Activated CD4-positive, alpha-beta memory T cell treated with anti-CD3 and anti-CD28 coated beads, Interleukin-2, amount 10 ng/mL, durations not matched to agents 7 days and 5 days (primary cell): ENCODE measurements at regions of chr2 and their contacts with region 1.

Region 1: DNA sequence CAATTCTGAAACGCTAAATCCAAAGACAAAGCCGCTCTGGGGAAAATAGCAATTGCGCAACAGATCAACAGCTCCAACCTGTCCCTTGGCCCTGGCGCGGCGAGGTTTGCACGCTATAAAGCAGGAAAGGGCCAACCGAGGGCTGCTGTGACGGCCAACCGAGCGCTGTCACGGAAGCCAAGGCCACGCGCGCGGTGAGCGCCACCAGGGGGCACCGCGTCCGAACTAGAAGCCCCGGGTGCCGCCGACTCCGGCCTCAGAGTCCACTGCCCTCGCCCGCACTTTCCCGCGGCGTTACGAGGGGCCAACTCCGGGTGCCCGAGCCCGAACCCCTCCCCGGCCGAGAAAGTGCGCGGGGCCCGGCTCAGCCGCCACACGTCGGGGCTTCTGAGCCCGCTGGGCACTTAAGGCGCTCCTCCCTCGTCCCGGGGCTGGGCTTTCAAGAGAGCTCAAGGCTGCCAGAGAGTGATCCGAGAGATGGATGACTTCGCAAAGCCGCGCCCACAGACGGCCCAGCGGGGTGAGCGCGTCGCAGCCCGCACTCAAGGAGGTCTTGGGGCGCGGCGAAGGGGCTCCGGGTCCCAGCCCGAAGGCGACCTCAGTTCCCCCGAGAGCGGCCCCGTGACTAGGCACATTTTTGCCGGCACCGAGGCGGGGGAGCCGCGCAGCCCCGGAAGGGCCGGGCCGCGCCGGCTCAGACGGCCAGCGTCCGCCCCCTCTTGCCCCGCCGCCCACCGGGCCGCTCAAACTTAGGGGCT is 897 bp downstream of the NFE2L2 start:
- DNase-seq: peak; percentile 95
- H3K4me3 Mint-ChIP-seq: peak overlapping the region; percentile 93
- H3K27ac Mint-ChIP-seq: peak overlapping the region; percentile 99
- H3K4me1 Mint-ChIP-seq: peaks cover 49% of the 10 kb centered on the region
- H3K27me3 Mint-ChIP-seq: peaks cover 3% of the 10 kb centered on the region

Region 2: DNA sequence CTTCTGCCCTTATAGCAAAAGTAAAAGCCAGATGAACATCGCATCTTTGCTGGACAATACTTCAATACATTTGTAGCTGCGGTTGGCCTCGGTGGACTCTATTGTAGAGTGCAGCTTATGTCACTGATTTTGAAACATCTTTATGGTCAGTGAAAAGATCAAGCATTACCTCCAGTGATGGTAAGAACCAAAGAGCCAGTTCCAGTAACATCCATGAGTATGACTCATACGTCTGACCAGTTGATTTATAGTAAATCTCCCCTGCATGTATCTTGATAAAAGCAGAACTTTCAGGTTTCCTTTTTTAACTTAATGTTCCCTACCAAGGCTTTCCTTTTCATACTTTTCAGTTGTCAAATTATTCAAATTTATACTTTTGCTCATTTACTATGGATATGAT is 170.3 kb before region 1 on chr2:
- CTCF ChIA-PET with region 1: no interaction called
- POLR2A ChIA-PET with region 1: no interaction called
- DNase-seq: no peak
- H3K4me3 Mint-ChIP-seq: no peak overlapping the region
- H3K27ac Mint-ChIP-seq: no peak overlapping the region
- H3K4me1 Mint-ChIP-seq: no peaks in the 10 kb centered on the region
- H3K27me3 Mint-ChIP-seq: peaks cover 15% of the 10 kb centered on the region

Region 3: DNA sequence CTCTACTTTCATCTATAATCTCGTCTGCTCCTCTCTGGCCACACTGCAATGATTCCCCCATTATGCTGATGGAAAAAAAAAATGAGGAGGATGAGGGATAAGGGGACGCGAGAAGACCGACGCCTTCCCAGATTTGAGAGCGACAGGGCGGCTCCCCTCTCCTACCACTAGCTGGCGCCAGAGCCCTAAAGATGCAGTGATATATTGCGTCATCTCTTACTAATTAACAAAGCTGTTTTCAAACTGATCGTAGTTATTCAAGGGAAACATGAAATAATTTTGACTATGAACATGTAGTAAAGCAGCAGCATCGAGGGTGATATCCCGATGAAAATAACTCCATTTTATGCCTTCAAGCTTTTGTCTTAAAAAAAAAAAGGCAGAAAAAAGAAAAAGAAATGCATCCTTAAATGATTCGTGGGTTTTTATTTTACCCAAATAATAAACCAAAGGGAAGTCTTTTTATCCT is 99.0 kb before region 1 on chr2:
- CTCF ChIA-PET with region 1: interaction called, 63 read pairs
- POLR2A ChIA-PET with region 1: interaction called, 102 read pairs
- DNase-seq: peak; percentile 83
- H3K4me3 Mint-ChIP-seq: no peak overlapping the region
- H3K27ac Mint-ChIP-seq: no peak overlapping the region
- H3K4me1 Mint-ChIP-seq: peaks cover 36% of the 10 kb centered on the region
- H3K27me3 Mint-ChIP-seq: peaks cover 9% of the 10 kb centered on the region

Region 4: DNA sequence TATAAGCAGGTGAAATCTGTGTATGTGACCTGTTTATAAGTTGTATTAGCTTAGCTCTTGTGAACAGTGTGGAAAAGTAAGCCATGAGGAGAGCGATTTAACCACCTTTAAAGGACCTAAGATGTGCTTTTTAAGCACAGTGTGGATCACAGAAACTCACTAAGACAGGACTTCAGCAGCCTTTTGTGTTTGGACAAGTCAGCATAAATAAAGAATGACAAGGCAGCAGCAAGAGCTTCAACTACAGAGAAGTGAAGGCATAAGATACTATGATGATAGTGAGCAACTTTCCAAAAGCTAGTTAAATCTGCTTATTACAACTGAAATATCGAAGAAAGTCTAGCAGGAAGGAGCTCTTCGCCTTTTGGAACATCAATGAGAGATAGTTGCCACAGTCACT is 42.1 kb before region 1 on chr2:
- CTCF ChIA-PET with region 1: interaction called, 5 read pairs
- POLR2A ChIA-PET with region 1: interaction called, 135 read pairs
- DNase-seq: no peak
- H3K4me3 Mint-ChIP-seq: no peak overlapping the region
- H3K27ac Mint-ChIP-seq: no peak overlapping the region
- H3K4me1 Mint-ChIP-seq: peaks cover 43% of the 10 kb centered on the region
- H3K27me3 Mint-ChIP-seq: no peaks in the 10 kb centered on the region

Region 5: DNA sequence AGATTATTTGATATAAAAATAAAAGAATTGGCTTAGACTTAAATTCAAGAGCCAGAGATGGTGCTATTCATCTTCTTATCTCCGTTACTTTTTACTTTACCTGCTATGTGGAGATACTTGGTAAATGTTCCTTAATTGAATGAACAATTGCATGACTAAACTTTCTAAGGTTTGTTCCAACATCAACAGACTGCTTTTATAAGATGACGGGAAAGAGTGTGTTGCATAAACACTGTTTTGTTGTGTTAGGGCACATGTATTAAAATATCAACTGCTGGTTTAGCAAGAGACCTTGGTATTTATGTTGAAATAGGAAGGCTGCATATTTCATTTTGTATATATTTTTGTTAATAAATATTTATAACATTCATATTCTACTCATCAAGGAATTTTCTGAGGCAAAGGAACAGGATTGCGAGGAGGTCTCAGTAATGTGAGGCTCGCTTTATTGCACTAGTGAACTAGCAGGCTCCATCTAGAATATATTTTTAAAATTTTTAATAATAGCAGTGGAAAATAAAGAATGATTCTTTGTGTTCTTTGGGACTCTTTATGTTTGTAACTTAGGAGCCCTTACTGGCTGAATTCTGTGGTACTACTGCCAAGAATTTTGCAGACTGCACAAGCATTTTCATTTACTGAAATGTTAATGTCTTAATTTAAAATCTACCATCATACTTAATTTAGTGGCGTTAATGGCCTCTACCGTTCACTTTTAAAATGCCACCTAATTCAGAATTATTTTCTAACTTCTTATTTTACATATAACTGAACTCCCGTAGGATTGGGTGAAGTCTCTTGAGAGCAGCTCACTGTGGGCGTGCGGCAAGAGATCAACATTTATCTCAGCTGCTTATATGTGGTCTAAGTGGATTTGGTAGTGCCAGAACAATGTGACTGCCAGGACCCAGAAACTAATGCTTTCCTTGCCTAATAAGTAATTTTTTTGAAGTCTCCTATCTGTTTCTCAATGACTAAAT is 11.7 kb after region 1 on chr2:
- CTCF ChIA-PET with region 1: interaction called, 18 read pairs
- POLR2A ChIA-PET with region 1: interaction called, 88 read pairs
- DNase-seq: no peak
- H3K4me3 Mint-ChIP-seq: no peak overlapping the region
- H3K27ac Mint-ChIP-seq: no peak overlapping the region
- H3K4me1 Mint-ChIP-seq: peaks cover 14% of the 10 kb centered on the region
- H3K27me3 Mint-ChIP-seq: no peaks in the 10 kb centered on the region

Region 6: GRCh38 chr2:177296040-177296439 is 32.4 kb after region 1 on chr2:
- CTCF ChIA-PET with region 1: interaction called, 125 read pairs
- POLR2A ChIA-PET with region 1: interaction called, 187 read pairs
- DNase-seq: no peak
- H3K4me3 Mint-ChIP-seq: no peak overlapping the region
- H3K27ac Mint-ChIP-seq: no peak overlapping the region
- H3K4me1 Mint-ChIP-seq: peaks cover 34% of the 10 kb centered on the region
- H3K27me3 Mint-ChIP-seq: no peaks in the 10 kb centered on the region

Region 7: GRCh38 chr2:177392373-177393202 is 129.0 kb after region 1 on chr2 and contains the start of gene AGPS:
- CTCF ChIA-PET with region 1: interaction called, 9 read pairs
- POLR2A ChIA-PET with region 1: interaction called, 40 read pairs
- DNase-seq: peak; percentile 86
- H3K4me3 Mint-ChIP-seq: peak within 1 kb of the TSS; percentile 96
- H3K27ac Mint-ChIP-seq: peak within 1 kb of the TSS; percentile 80
- H3K4me1 Mint-ChIP-seq: peaks cover 51% of the 10 kb centered on the region
- H3K27me3 Mint-ChIP-seq: no peaks in the 10 kb centered on the region
- total RNA-seq, gene AGPS: 52.0 to 52.8 TPM